Heart right ventricle (tissue), 16 donors: ENCODE measurements at regions of chr18 and their contacts with region 1.

Region 1: DNA sequence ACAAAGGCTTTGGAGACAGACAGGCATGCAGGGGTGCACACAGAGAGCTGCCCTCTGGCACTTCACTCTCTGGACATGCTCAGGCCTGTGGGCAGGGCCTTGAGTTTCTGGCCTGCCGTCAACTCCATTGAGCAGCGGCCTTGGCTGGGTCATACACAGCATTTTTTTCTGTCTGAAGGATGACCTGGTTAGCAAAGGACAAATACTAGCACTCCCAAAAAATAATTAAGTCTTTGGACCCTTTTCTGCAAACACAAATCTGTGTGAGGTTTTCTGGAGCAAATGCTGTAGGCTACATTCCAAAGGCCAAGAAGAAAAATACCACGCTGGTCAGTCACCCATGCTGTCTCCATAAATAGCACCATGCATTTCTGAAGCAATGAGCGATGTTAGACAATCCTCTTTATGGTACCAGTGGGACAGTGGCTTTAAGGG is 124.7 kb upstream of the CTAGE1 start:
- DNase-seq: peak in 1 of 2 donors; percentile 34
- ATAC-seq: peak in 7 of 8 donors; percentile 22 to 84 (median 47)
- H3K4me3 ChIP-seq: no peak overlapping the region
- H3K27ac ChIP-seq: peak overlapping the region in 6 of 10 donors; percentile 4 to 62 (median 42)
- H3K4me1 ChIP-seq: peaks cover 13 to 56% (median 27%) of the 10 kb centered on the region in 9 donors
- H3K27me3 ChIP-seq: no peaks in the 10 kb centered on the region
- CTCF ChIP-seq: no peak

Region 2: GRCh38 chr18:22485808-22486244 is 56.6 kb before region 1 on chr18:
- intact Hi-C with region 1: loop called in 3 of 10 experiments (anchors 5 to 10 kb)
- DNase-seq: no peak
- ATAC-seq: peak in 1 of 8 donors; percentile 18
- H3K4me3 ChIP-seq: no peak overlapping the region
- H3K27ac ChIP-seq: no peak overlapping the region
- H3K4me1 ChIP-seq: peaks cover 0 to 28% (median 12%) of the 10 kb centered on the region in 9 donors
- H3K27me3 ChIP-seq: no peaks in the 10 kb centered on the region
- CTCF ChIP-seq: no peak

Region 3: GRCh38 chr18:22494771-22495170 is 47.6 kb before region 1 on chr18:
- intact Hi-C with region 1: loop called in 3 of 10 experiments (anchors 5 to 10 kb)
- DNase-seq: no peak
- ATAC-seq: peak in 7 of 8 donors; percentile 67 to 85 (median 82)
- H3K4me3 ChIP-seq: no peak overlapping the region
- H3K27ac ChIP-seq: peak overlapping the region in 8 of 10 donors; percentile 29 to 78 (median 50)
- H3K4me1 ChIP-seq: peaks cover 0 to 34% (median 6%) of the 10 kb centered on the region in 9 donors
- H3K27me3 ChIP-seq: no peaks in the 10 kb centered on the region
- CTCF ChIP-seq: no peak

Region 4: GRCh38 chr18:22503803-22504202 is 38.6 kb before region 1 on chr18:
- intact Hi-C with region 1: loop called in 2 of 10 experiments (anchors 5 to 10 kb)
- DNase-seq: peak; percentile 48 to 57
- ATAC-seq: peak; percentile 89 to 95 (median 92)
- H3K4me3 ChIP-seq: no peak overlapping the region
- H3K27ac ChIP-seq: peak overlapping the region in 9 of 10 donors; percentile 35 to 71 (median 56)
- H3K4me1 ChIP-seq: peaks cover 0 to 25% (median 11%) of the 10 kb centered on the region in 9 donors
- H3K27me3 ChIP-seq: no peaks in the 10 kb centered on the region
- CTCF ChIP-seq: no peak

Region 5: DNA sequence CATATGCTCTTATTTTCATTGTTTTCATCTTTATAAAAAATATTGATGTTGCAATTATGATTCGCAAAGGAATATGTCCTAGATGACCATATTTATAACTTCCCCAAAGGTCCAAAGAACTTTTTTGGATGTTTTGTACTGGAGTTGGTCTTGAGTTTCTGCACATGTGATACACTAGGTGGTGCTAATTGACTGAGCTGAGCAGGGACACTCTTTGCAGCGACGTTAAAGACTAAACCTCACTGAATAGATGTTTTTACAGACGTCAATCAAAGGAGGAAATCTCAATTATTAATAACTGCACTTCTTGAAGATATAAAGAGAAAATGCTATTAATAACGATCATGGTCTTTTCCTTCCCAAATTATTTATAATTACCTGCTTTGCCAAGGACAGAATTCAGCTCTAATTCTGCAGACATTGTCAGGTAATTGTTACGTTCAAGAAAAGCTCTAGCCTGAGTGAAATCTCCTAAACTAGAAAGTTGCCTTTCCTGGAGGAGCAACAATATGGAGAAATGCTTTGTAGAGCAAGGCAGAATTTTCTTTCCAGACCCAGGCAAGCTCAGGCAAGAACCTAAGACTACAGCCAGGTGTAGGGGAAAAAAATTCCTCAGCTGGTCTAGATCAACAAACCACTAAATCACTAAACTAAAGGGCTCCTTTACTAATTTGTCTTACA is 271.4 kb after region 1 on chr18:
- intact Hi-C with region 1: no loop called
- DNase-seq: no peak
- ATAC-seq: no peak
- H3K4me3 ChIP-seq: no peak overlapping the region
- H3K27ac ChIP-seq: no peak overlapping the region
- H3K4me1 ChIP-seq: no peaks in the 10 kb centered on the region
- H3K27me3 ChIP-seq: peaks cover 0 to 14% (median 7%) of the 10 kb centered on the region in 7 donors
- CTCF ChIP-seq: peak in 8 of 9 donors; percentile 23 to 74 (median 58)

Region 6: GRCh38 chr18:22883179-22883578 is 340.8 kb after region 1 on chr18:
- intact Hi-C with region 1: no loop called
- DNase-seq: no peak
- ATAC-seq: no peak
- H3K4me3 ChIP-seq: no peak overlapping the region
- H3K27ac ChIP-seq: no peak overlapping the region
- H3K4me1 ChIP-seq: no peaks in the 10 kb centered on the region
- H3K27me3 ChIP-seq: no peaks in the 10 kb centered on the region
- CTCF ChIP-seq: no peak